ENCODE measurements at regions of chr2 and their contacts with region 1.

Region 1: GRCh38 chr2:55309446-55309845 is 40.4 kb upstream of the MTIF2 start:
- DNase-seq: peak; percentile 80
- ATAC-seq: peak; percentile 54; the same call in 1 of the 2 replicates
- H3K4me3 ChIP-seq: no peak overlapping the region
- H3K27ac ChIP-seq: no peak overlapping the region
- H3K4me1 ChIP-seq: peaks cover 2% of the 10 kb centered on the region
- H3K27me3 ChIP-seq: no peaks in the 10 kb centered on the region
- CTCF ChIP-seq: no peak
- POLR2A ChIP-seq: no peak
- RAD21 ChIP-seq: no peak

Region 2: GRCh38 chr2:55338268-55338667 is 28.8 kb after region 1 on chr2:
- CTCF ChIA-PET with region 1: no interaction called
- POLR2A ChIA-PET with region 1: no interaction called
- dilution Hi-C with region 1: no loop called
- in situ Hi-C with region 1: no loop called
- intact Hi-C with region 1: loop called (anchors 2 kb)
- DNase-seq: peak; percentile 67
- ATAC-seq: peak; percentile 63
- H3K4me3 ChIP-seq: no peak overlapping the region
- H3K27ac ChIP-seq: no peak overlapping the region
- H3K4me1 ChIP-seq: peaks cover 2% of the 10 kb centered on the region; the same call in 1 of the 2 replicates
- H3K27me3 ChIP-seq: no peaks in the 10 kb centered on the region
- CTCF ChIP-seq: no peak
- POLR2A ChIP-seq: no peak
- RAD21 ChIP-seq: no peak